Activated CD4-positive, alpha-beta T cell treated with anti-CD3 and anti-CD28 coated beads, Interleukin-2, amount 10 ng/mL, durations not matched to agents 24 days and 14 days (primary cell): ENCODE measurements at regions of chr4 and their contacts with region 1.

Region 1: DNA sequence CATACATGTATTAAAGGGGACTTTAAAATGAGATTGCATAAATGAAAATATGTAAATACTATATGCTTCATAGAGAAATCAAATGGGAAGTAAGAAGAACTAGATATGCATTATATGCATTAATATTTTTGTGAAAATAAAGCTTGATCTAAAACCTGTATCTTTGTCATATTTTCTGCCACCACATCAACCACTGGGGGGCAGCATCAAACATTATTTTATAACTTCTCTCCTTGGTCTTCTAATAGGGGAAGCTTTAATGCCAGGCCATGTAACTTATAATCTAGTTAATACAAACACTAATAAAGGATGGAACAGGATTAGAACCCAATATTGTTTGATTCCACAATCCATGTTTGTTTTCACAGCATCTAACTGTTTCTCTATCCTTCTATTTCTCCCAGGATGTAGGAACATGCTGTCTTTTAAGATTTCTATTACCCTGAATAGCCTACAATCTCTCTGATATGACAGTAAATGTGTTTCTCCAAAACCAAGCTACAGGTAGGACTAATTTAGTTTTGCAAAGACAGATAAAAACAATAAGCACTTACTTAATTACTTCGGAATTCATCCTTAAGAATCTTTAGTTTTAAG is 10.0 kb downstream of the QRFPR start:
- DNase-seq: peak; percentile 68
- H3K4me3 Mint-ChIP-seq: no peak overlapping the region
- H3K27ac Mint-ChIP-seq: no peak overlapping the region
- H3K4me1 Mint-ChIP-seq: no peaks in the 10 kb centered on the region
- H3K27me3 Mint-ChIP-seq: peaks cover 16% of the 10 kb centered on the region

Region 2: DNA sequence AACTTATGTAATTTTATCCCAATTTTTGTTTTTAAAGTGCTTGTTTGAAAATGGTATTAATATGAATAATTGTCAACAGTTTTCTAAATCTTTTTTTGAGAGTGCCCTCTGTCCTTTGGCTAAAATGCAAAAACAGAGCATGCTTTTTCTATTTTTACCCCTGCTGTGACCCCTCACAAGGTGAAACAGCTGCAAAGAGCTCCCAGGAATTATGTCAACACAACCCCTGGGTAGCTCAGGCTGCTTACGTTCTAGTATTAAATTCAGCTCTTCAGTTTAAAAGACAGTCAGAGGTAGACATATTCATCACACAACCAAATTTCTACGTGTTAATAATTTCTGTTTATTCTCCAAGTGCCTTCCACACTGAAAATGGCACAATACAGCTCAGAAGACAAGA is 815.8 kb before region 1 on chr4:
- intact Hi-C with region 1: no loop called
- DNase-seq: no peak
- H3K4me3 Mint-ChIP-seq: no peak overlapping the region
- H3K27ac Mint-ChIP-seq: no peak overlapping the region
- H3K4me1 Mint-ChIP-seq: no peaks in the 10 kb centered on the region
- H3K27me3 Mint-ChIP-seq: no peaks in the 10 kb centered on the region

Region 3: GRCh38 chr4:121360495-121360894 is 10.3 kb before region 1 on chr4:
- intact Hi-C with region 1: loop called (anchors 1 kb)
- DNase-seq: no peak
- H3K4me3 Mint-ChIP-seq: no peak overlapping the region
- H3K27ac Mint-ChIP-seq: no peak overlapping the region
- H3K4me1 Mint-ChIP-seq: no peaks in the 10 kb centered on the region
- H3K27me3 Mint-ChIP-seq: peaks cover 6% of the 10 kb centered on the region

Region 4: DNA sequence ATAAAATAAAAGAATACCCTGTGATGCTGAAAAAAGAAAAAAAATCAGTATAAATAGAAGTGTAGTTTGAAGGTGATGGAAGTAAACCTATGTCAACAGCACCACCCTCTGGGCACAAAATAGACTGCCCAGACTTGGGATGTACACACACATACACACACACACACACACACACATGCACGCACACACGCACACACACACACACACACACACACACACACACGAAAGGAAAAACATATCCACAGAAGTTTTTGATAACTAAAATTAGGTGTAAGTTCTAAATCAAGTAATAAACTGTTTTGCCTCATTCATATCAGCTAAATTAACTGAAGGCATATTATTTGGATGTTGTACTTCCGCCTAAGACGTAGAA is 285.4 kb after region 1 on chr4:
- intact Hi-C with region 1: loop called (anchors 10 kb)
- DNase-seq: peak; percentile 63
- H3K4me3 Mint-ChIP-seq: no peak overlapping the region
- H3K27ac Mint-ChIP-seq: no peak overlapping the region
- H3K4me1 Mint-ChIP-seq: no peaks in the 10 kb centered on the region
- H3K27me3 Mint-ChIP-seq: peaks cover 28% of the 10 kb centered on the region

Region 5: GRCh38 chr4:121736735-121737351 is 366.0 kb after region 1 on chr4:
- intact Hi-C with region 1: loop called (anchors 1 kb)
- DNase-seq: peak; percentile 77
- H3K4me3 Mint-ChIP-seq: no peak overlapping the region
- H3K27ac Mint-ChIP-seq: no peak overlapping the region
- H3K4me1 Mint-ChIP-seq: no peaks in the 10 kb centered on the region
- H3K27me3 Mint-ChIP-seq: peaks cover 34% of the 10 kb centered on the region